Activated CD8-positive, alpha-beta T cell treated with anti-CD3 and anti-CD28 coated beads for 36 hours (primary cell): ENCODE measurements at regions of chr22 and their contacts with region 1.

Region 1: DNA sequence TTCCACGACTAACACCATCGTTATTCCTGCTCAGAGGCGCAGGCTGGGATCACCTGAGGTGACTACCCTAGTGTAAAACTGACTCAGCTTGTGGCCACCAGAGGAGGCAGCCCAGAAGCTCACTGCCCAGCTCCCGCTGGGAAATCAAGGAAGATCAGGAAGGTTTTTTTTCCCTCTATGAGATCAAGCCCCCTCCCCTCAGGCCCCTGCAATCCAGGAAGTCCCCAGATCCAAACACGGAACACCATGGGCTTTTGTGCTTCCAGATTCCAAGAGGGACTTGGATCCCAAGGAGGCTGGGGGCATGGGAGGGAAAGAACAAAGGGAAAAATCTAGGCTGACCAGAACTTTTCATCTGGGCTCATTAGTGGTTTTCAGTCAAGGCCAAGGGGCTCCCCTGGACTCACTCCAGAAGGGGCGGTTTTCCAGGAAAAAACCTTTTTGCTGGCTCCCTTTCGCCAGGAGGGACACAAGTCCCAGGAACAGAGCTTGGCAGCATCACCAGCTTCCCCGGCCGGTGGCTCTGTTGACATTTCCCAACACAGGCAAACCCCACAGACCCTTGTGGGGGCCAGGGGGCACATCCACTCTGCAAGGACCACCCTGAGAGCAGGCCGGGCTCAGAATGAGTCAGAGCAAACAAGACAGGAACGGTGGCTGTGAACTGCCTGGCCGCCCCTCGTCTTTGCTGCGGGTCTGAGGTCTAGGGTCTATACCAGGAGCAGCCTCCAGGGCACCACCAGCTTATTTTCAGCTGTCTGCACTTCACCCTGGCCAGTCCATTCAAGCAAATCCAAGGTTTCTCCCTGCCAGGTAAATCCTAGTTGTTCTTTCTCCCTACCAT is 36.8 kb downstream of the MYH9 start:
- DNase-seq: peak; percentile 65
- ATAC-seq: peak; percentile 28
- H3K4me3 Mint-ChIP-seq: peak overlapping the region; percentile 50
- H3K27ac Mint-ChIP-seq: peak overlapping the region; percentile 91
- H3K4me1 Mint-ChIP-seq: peaks cover 88% of the 10 kb centered on the region
- H3K27me3 Mint-ChIP-seq: no peaks in the 10 kb centered on the region
- CTCF ChIP-seq: no peak

Region 2: GRCh38 chr22:36339171-36340065 is 11.6 kb before region 1 on chr22:
- CTCF ChIA-PET with region 1: interaction called, 15 read pairs
- POLR2A ChIA-PET with region 1: interaction called, 1,125 read pairs
- intact Hi-C with region 1: no loop called
- DNase-seq: peak; percentile 82
- ATAC-seq: peak; percentile 25
- H3K4me3 Mint-ChIP-seq: no peak overlapping the region
- H3K27ac Mint-ChIP-seq: peak overlapping the region; percentile 88
- H3K4me1 Mint-ChIP-seq: peaks cover 93% of the 10 kb centered on the region
- H3K27me3 Mint-ChIP-seq: no peaks in the 10 kb centered on the region
- CTCF ChIP-seq: no peak

Region 3: GRCh38 chr22:36439481-36440271 is 88.7 kb after region 1 on chr22:
- CTCF ChIA-PET with region 1: no interaction called
- POLR2A ChIA-PET with region 1: no interaction called
- intact Hi-C with region 1: no loop called
- DNase-seq: peak; percentile 52
- ATAC-seq: peak; percentile 22
- H3K4me3 Mint-ChIP-seq: no peak overlapping the region
- H3K27ac Mint-ChIP-seq: peak overlapping the region; percentile 8
- H3K4me1 Mint-ChIP-seq: peaks cover 44% of the 10 kb centered on the region
- H3K27me3 Mint-ChIP-seq: no peaks in the 10 kb centered on the region
- CTCF ChIP-seq: no peak